ENCODE measurements at regions of chrX and their contacts with region 1.

Region 1: GRCh38 chrX:70030301-70030767 is 19.4 kb downstream of the AWAT2 start:
- DNase-seq: peak; percentile 77

Region 2: DNA sequence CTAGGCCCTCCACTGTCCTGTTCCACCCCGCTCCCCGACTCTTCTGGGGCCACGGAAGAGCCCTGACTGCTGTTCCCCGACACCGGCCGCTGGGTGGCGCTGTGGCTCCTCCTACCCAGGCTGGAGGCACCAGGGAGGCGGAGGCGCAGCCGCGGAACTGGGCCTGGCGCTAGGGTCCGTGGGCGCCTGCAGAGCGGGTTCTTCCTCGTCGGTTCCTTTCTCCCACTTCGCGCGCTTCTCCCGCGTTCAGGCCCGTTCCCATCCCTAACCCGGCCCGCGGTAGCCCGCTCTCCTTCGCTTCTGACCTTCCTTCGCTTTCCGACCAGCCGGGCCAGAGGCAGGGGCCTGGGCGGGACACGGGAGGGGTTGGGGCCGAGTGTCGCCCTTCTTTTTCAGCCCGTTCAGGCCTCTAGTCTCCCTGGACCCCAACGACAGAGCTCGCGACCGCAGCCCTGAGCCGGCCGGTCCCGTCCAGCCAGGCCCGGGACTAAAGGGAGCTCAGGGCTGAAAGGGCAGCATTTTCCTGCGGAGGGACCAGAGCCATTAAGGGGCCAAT is 491.9 kb before region 1 on chrX:
- CTCF ChIA-PET with region 1: interaction called, 11 read pairs
- POLR2A ChIA-PET with region 1: no interaction called
- DNase-seq: peak; percentile 87

Region 3: GRCh38 chrX:69618803-69619202 is 411.5 kb before region 1 on chrX:
- CTCF ChIA-PET with region 1: interaction called, 10 read pairs
- POLR2A ChIA-PET with region 1: no interaction called
- DNase-seq: peak; percentile 14

Region 4: DNA sequence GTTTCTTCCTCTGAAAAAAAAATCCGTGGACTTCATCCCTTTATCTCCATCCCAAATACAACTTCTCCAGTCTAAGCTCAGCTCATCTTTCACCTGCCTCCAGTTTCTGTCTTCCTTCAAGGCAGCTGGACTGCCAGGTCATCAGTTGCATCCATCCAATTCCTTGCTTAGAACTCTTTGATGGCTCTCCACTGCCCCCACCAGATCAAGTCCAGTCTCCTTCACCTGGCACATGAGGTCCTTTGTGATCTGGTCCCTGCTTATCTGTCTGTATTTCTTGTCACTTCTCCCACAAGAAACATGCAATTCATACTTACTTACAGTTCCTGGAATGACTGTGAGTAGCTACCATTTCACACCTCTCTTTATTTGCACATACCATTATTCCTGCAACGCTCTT is 65.7 kb after region 1 on chrX:
- CTCF ChIA-PET with region 1: interaction called, 27 read pairs
- POLR2A ChIA-PET with region 1: interaction called, 3 read pairs
- DNase-seq: peak; percentile 18